T-cell (primary cell): ENCODE measurements at regions of chr17 and their contacts with region 1.

Region 1: GRCh38 chr17:39848600-39848999 is 15.5 kb downstream of the IKZF3 start:
- DNase-seq: peak in 12 of 35 experiments; percentile 8 to 55 (median 22)
- ATAC-seq: peak in 3 of 4 experiments; percentile 73 to 87 (median 73)
- H3K4me3 ChIP-seq: no peak overlapping the region
- H3K4me3 Mint-ChIP-seq: peak overlapping the region in 1 of 3 donors; percentile 48
- H3K27ac ChIP-seq: peak overlapping the region; percentile 15
- H3K27ac Mint-ChIP-seq: peak overlapping the region; percentile 82 to 88
- H3K4me1 ChIP-seq: peaks cover 24 to 32% of the 10 kb centered on the region in 2 experiments
- H3K4me1 Mint-ChIP-seq: peaks cover 72 to 73% (median 72%) of the 10 kb centered on the region in 3 donors
- H3K27me3 ChIP-seq: no peaks in the 10 kb centered on the region
- H3K27me3 Mint-ChIP-seq: no peaks in the 10 kb centered on the region

Region 2: GRCh38 chr17:39636927-39637736 is 211.5 kb before region 1 on chr17 and contains the start of gene STARD3:
- CTCF ChIA-PET with region 1: no interaction called
- POLR2A ChIA-PET with region 1: no interaction called
- DNase-seq: peak; percentile 77 to 94 (median 87)
- ATAC-seq: peak; percentile 90 to 92 (median 90)
- H3K4me3 ChIP-seq: peak within 1 kb of the TSS; percentile 71 to 87
- H3K4me3 Mint-ChIP-seq: peak within 1 kb of the TSS; percentile 91 to 94 (median 92)
- H3K27ac ChIP-seq: peak within 1 kb of the TSS; percentile 95
- H3K27ac Mint-ChIP-seq: peak within 1 kb of the TSS; percentile 88 to 94
- H3K4me1 ChIP-seq: peaks cover 36 to 65% of the 10 kb centered on the region in 2 experiments
- H3K4me1 Mint-ChIP-seq: peaks cover 59 to 64% (median 61%) of the 10 kb centered on the region in 3 donors
- H3K27me3 ChIP-seq: peaks cover 0 to 13% of the 10 kb centered on the region in 2 experiments
- H3K27me3 Mint-ChIP-seq: peaks cover 0 to under 1% of the 10 kb centered on the region in 2 donors
- total RNA-seq, gene STARD3: 81.3 to 146 (median 99.7) TPM

Region 3: GRCh38 chr17:39730095-39730921 is 118.3 kb before region 1 on chr17 and contains the start of gene MIEN1:
- CTCF ChIA-PET with region 1: no interaction called
- POLR2A ChIA-PET with region 1: interaction called in 1 of 2 experiments, 12 read pairs
- DNase-seq: peak; percentile 69 to 98 (median 90)
- ATAC-seq: peak; percentile 93 to 98 (median 94)
- H3K4me3 ChIP-seq: peak within 1 kb of the TSS; percentile 49 to 90
- H3K4me3 Mint-ChIP-seq: peak within 1 kb of the TSS; percentile 86 to 90 (median 89)
- H3K27ac ChIP-seq: peak within 1 kb of the TSS; percentile 82
- H3K27ac Mint-ChIP-seq: peak within 1 kb of the TSS; percentile 88 to 89
- H3K4me1 ChIP-seq: peaks cover 4 to 31% of the 10 kb centered on the region in 2 experiments
- H3K4me1 Mint-ChIP-seq: peaks cover 15 to 22% (median 21%) of the 10 kb centered on the region in 3 donors
- H3K27me3 ChIP-seq: no peaks in the 10 kb centered on the region
- H3K27me3 Mint-ChIP-seq: no peaks in the 10 kb centered on the region
- total RNA-seq, gene MIEN1: 30.8 to 36.9 (median 32.1) TPM

Region 4: GRCh38 chr17:39903158-39903884 is 54.7 kb after region 1 on chr17:
- CTCF ChIA-PET with region 1: no interaction called
- POLR2A ChIA-PET with region 1: no interaction called
- DNase-seq: peak in 1 of 35 experiments; percentile 24
- ATAC-seq: peak; percentile 54 to 77 (median 76)
- H3K4me3 ChIP-seq: no peak overlapping the region
- H3K4me3 Mint-ChIP-seq: no peak overlapping the region
- H3K27ac ChIP-seq: no peak overlapping the region
- H3K27ac Mint-ChIP-seq: peak overlapping the region; percentile 39 to 76
- H3K4me1 ChIP-seq: peaks cover 6 to 18% of the 10 kb centered on the region in 2 experiments
- H3K4me1 Mint-ChIP-seq: peaks cover 13 to 24% (median 23%) of the 10 kb centered on the region in 3 donors
- H3K27me3 ChIP-seq: no peaks in the 10 kb centered on the region
- H3K27me3 Mint-ChIP-seq: no peaks in the 10 kb centered on the region